GM12878 (cell line): ENCODE measurements at regions of chr16 and their contacts with region 1.

Region 1: GRCh38 chr16:77951775-77952174 is 70.6 kb upstream of the CLEC3A start:
- DNase-seq: peak; percentile 21
- ATAC-seq: peak; percentile 73
- H3K4me3 ChIP-seq: no peak overlapping the region
- H3K27ac ChIP-seq: no peak overlapping the region
- H3K4me1 ChIP-seq: peaks cover 20% of the 10 kb centered on the region
- H3K27me3 ChIP-seq: no peaks in the 10 kb centered on the region
- CTCF ChIP-seq: peak; percentile 55 to 57 (median 56); a peak in 4 of 6 replicates
- EP300 ChIP-seq: no peak
- POLR2A ChIP-seq: no peak
- RAD21 ChIP-seq: peak; percentile 78

Region 2: DNA sequence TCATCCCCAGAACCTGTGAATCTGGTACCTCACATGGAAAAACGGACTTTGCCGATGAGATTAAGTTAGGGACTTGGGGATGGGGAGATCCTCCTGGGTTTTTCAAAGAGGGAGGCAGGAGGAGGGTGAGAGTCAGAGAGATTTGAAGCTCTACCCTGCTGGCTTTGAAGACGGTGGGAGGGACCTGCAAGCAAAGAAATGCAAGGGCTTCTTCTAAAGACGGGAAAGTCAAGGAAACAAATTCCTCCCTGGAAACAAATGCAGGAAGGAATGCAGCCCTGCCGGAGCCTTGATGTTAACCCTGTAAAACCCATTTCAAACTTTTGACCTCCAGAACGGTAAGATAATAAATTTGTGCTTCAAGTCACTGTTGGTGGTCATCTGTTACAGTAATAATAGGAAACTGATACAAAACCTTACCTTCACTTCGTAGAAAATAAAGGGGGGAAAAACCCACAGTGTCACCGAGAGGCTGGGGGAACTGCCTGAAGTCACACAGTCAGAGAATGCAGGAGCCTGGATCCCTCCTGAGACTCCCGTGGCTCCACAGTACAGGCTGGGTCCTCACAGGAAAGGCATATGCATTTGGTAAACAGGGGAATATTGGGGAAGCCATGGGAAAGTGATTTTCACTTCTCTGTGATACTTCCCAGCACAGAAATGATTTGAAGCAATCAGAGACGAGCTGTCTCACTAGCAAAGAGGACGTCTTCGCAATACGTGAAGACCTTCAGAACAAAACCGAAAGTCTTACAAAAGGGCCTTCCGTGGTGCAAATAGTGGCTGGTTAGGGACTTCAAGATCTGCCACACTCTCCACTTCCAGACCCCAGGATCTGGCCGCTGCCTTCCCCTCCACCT is 11.6 kb after region 1 on chr16:
- CTCF ChIA-PET with region 1: interaction called, 8 read pairs
- POLR2A ChIA-PET with region 1: no interaction called
- RAD21 ChIA-PET with region 1: interaction called, 17 read pairs
- SMC1A ChIA-PET with region 1: interaction called, 4 read pairs
- in situ Hi-C with region 1: no loop called
- intact Hi-C with region 1: loop called (anchors 1 kb)
- DNase-seq: peak; percentile 52
- ATAC-seq: peak; percentile 90
- H3K4me3 ChIP-seq: peak overlapping the region; percentile 46; the same call in 1 of the 2 replicates
- H3K27ac ChIP-seq: peak overlapping the region; percentile 89
- H3K4me1 ChIP-seq: peaks cover 14% of the 10 kb centered on the region
- H3K27me3 ChIP-seq: no peaks in the 10 kb centered on the region
- CTCF ChIP-seq: no peak
- EP300 ChIP-seq: 0 out of 4 replicates have a peak, but pooled peaks of 1 of the 2 experiments have one; percentile 6
- POLR2A ChIP-seq: no peak; the same call in 1 of the 2 replicates
- RAD21 ChIP-seq: no peak

Region 3: GRCh38 chr16:77971306-77972271 is 19.8 kb after region 1 on chr16:
- CTCF ChIA-PET with region 1: interaction called, 9 read pairs
- POLR2A ChIA-PET with region 1: no interaction called
- RAD21 ChIA-PET with region 1: interaction called, 17 read pairs
- SMC1A ChIA-PET with region 1: interaction called, 4 read pairs
- in situ Hi-C with region 1: no loop called
- intact Hi-C with region 1: loop called (anchors 1 kb)
- DNase-seq: no peak
- ATAC-seq: peak; percentile 95
- H3K4me3 ChIP-seq: no peak overlapping the region
- H3K27ac ChIP-seq: no peak overlapping the region
- H3K4me1 ChIP-seq: no peaks in the 10 kb centered on the region
- H3K27me3 ChIP-seq: no peaks in the 10 kb centered on the region
- CTCF ChIP-seq: peak; percentile 68 to 90 (median 76)
- EP300 ChIP-seq: no peak
- POLR2A ChIP-seq: no peak
- RAD21 ChIP-seq: peak; percentile 96

Region 4: DNA sequence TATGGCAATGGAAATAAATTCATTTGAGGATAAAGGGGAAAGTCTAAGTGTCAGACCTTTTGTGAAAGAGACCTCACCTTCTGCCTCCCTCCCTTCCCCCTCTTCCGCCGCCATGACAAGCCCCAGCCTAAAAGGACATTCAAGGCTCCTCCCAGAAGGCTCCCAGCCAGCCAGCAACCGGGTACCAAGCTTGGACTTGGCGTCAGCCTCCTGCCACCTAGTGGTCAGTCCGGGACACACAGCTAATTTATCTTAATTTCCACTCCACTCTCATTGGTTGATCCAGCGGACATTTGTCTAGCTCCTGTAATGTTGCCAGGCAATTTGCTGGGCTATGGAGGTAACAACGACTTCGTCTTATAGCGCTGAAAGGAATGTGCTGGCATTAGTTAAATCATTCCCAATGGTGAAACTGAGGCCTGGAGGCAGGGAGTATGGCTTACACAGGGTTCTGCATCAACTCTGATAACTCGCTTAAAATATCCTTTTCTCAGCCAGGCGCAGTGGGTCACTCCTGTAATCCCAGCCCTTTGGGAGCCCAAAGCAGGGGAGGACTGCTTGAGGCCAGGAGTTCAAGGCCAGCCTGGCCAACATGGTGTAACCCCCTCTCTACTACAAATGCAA is 51.3 kb after region 1 on chr16:
- CTCF ChIA-PET with region 1: interaction called, 22 read pairs
- POLR2A ChIA-PET with region 1: no interaction called
- RAD21 ChIA-PET with region 1: interaction called, 4 read pairs
- SMC1A ChIA-PET with region 1: interaction called, 4 read pairs
- in situ Hi-C with region 1: no loop called
- intact Hi-C with region 1: loop called (anchors 1 kb)
- DNase-seq: peak; percentile 51
- ATAC-seq: peak; percentile 97
- H3K4me3 ChIP-seq: no peak overlapping the region
- H3K27ac ChIP-seq: no peak overlapping the region
- H3K4me1 ChIP-seq: no peaks in the 10 kb centered on the region
- H3K27me3 ChIP-seq: no peaks in the 10 kb centered on the region
- CTCF ChIP-seq: peak; percentile 85 to 97 (median 90)
- EP300 ChIP-seq: no peak
- POLR2A ChIP-seq: no peak
- RAD21 ChIP-seq: peak; percentile 84

Region 5: DNA sequence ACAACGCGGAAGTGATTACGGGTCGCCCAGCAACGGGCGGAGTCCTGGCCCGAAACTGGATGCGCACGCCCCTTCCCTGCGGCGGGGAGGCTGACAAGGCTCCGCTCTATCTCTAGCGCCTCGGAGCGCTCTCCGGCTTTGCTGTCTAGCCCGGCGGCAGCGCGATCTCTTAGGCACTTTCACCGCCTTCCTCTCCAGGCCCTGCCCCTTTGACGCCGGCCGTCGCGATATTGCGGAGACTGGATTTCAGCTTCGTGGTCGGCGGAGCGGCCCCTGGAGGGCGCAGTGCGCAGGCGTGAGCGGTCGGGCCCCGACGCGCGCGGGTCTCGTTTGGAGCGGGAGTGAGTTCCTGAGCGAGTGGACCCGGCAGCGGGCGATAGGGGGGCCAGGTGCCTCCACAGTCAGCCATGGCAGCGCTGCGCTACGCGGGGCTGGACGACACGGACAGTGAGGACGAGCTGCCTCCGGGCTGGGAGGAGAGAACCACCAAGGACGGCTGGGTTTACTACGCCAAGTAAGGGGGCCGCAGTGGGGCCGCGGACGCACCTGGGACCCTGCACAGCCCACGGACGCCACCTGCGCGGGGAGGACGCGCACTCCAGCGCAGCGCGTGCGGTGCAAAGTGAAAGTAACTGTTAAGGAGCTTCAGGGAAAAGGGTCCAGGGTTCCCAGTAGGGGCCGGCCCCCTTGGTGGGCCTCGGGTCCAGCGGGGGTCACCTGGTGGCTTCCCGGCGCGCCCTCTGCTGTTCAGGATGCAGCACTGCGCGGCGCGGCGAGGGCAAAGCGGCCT is 147.8 kb after region 1 on chr16 and contains the start of gene WWOX:
- CTCF ChIA-PET with region 1: no interaction called
- POLR2A ChIA-PET with region 1: no interaction called
- RAD21 ChIA-PET with region 1: no interaction called
- SMC1A ChIA-PET with region 1: no interaction called
- in situ Hi-C with region 1: no loop called
- intact Hi-C with region 1: loop called (anchors 5 kb)
- DNase-seq: peak; percentile 88
- ATAC-seq: peak; percentile 95
- H3K4me3 ChIP-seq: peak within 1 kb of the TSS; percentile 81
- H3K27ac ChIP-seq: peak within 1 kb of the TSS; percentile 63
- H3K4me1 ChIP-seq: peaks cover 10% of the 10 kb centered on the region; the same call in 1 of the 2 replicates
- H3K27me3 ChIP-seq: no peaks in the 10 kb centered on the region
- CTCF ChIP-seq: peak; percentile 73 to 95 (median 83)
- EP300 ChIP-seq: no peak
- POLR2A ChIP-seq: peak; percentile 90
- RAD21 ChIP-seq: peak; percentile 41; the same call in 1 of the 2 replicates
- polyA plus RNA-seq, gene WWOX: 2.8 to 4.6 TPM